ENCODE measurements at regions of chr9 and their contacts with region 1.

Region 1: GRCh38 chr9:71812385-71812784 is 44.1 kb upstream of the CEMIP2 start:
- DNase-seq: peak in 9 of 10 donors; percentile 23 to 92 (median 60)

Region 2: GRCh38 chr9:71911253-71912074 is 99.1 kb after region 1 on chr9 and contains the start of gene C9orf85:
- intact Hi-C with region 1: loop called (anchors 5 kb)
- DNase-seq: peak; percentile 99 to 100 (median 100)

Region 3: DNA sequence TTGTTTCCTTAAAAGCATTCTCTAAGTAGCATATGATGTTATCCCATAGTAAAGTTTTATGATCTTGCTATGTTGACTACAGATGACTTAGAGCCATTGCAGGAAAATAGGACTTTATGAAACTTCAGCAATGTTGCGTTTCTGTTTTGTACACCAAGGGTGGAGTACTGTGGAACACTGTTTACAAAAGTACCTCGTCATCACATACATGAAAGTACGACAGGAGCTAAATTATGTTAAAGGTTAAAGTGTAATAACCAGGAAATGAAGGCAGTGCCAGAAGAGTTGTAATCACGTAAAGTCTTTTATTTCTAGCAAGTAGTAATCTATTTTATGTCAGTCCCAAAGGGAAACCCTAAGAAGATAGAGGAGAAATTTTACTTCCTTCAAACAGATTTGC is 149.9 kb after region 1 on chr9:
- intact Hi-C with region 1: no loop called
- DNase-seq: no peak

Region 4: GRCh38 chr9:71975833-71976232 is 163.4 kb after region 1 on chr9:
- intact Hi-C with region 1: loop called (anchors 5 kb)
- DNase-seq: no peak

Region 5: DNA sequence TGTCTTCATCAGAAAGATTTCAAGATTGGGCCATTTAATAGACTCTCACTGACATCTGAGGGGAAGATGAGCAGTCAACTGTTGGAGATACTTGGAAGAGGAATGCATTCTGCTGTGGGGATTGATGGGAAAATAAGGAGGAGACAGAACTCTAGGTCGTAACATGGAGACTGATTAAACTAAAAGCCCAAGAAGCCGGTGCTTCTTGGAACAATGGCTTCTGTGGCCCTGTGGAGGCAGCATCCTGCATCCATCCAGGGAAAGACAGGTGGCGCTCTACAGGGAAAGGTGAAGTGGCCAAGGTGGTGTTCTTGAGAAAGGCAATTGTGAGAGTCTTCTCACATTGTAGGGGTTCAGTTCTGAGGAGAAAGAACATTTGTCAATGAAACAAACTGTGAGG is 521.3 kb after region 1 on chr9:
- intact Hi-C with region 1: no loop called
- DNase-seq: no peak